ENCODE measurements at regions of chr22 and their contacts with region 1.

Region 1: DNA sequence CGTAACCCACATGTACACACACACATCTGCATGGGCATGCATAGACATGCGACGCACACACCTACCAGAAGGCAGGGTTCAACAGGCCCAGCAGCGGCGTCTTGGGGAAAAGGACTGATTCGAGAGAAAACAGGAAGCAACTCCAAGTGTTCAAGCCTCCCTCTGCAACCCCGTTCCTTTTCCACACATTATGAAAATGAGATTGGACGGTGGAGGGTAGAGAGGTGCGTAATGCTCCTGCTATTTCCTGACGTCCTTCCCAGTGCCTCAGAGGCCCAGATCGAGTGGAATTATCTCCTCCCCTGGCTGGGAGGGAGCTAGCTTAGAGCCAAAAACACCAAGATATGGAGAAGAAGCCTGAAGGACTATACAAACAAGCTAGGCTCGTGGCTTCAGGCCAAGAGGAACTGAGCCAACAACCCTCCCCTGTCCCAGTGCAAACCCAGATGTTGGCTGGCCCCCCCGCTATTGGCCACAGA is 289.2 kb downstream of the MN1 start:
- DNase-seq: peak; percentile 92
- ATAC-seq: peak; percentile 85

Region 2: GRCh38 chr22:27223317-27224177 is 288.8 kb before region 1 on chr22:
- intact Hi-C with region 1: no loop called
- DNase-seq: no peak
- ATAC-seq: peak; percentile 39

Region 3: DNA sequence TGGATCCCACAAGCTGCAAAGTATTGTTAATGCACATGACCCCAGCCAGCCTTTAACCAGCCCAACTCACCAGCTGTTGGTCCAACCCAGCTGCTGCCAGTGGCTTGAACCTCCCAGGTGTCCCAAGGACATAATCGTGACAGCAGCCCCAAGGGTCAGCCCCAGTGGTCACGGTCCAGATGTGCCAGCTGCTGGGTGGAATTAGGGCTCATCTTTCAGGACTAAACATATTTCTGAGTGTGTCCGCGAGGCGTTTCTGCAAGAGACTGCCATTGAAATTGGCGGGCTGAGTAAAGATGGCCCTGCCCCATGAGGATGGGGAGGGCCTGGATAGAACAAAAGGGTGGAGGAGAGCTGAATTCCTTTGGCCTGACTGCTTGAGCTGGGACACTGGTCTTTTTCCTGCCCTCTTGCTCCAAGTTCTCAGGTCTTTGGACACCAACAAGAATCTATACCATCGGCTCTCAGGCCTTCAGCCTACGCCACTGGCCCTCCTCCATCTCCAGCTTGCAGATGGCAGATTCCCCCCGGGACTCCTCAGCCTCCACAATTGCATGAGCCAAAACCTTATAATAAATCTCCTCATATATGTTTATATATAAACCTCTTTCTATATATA is 49.1 kb after region 1 on chr22:
- intact Hi-C with region 1: no loop called
- DNase-seq: no peak
- ATAC-seq: no peak

Region 4: DNA sequence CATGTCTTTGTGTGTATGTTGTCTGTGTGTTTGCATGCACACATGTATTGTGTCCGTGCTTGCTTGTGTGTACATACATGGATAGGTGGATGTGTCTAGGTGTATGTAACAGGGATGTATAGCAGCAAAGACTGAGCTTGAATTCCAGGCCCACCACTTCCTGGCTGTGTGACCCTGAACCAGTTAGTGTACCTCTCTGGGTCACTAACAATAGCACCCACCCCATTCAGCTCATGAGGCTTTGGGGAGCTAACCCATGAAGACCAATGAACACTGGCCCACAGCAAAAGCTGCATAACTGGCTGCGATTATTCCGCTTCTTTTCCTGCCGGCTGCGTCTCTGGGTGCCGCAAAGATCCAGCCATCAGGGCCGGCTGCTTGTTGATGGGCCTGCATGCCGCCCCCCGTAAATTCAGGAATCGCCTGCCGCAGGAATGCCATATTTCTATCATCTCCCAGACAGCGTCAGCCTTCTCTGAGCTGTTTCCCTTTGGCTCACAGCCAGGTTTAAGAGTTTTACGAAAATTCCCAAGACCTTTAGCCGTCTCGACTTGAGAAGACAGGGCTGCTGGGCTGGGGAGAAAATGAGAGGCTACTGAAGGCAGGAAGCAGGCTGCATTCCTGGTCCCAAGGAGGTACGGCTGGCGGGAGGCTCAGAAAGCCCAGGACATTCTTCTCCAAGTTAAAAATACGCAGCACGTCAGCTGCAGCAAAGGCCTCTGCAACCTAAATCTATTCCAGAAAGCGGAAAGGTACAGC is 64.7 kb after region 1 on chr22:
- intact Hi-C with region 1: loop called (anchors 5 kb)
- DNase-seq: no peak
- ATAC-seq: peak; percentile 62

Region 5: GRCh38 chr22:27799334-27800249 is 287.3 kb after region 1 on chr22:
- intact Hi-C with region 1: loop called (anchors 10 kb)
- DNase-seq: peak; percentile 71
- ATAC-seq: no peak